Activated naive CD4-positive, alpha-beta T cell treated with anti-CD3 and anti-CD28 coated beads for 36 hours (primary cell): ENCODE measurements at regions of chr13 and their contacts with region 1.

Region 1: GRCh38 chr13:114128624-114129522 is 3.5 kb downstream of the RASA3 start:
- DNase-seq: peak; percentile 96
- H3K4me3 Mint-ChIP-seq: peak overlapping the region; percentile 97
- H3K27ac Mint-ChIP-seq: peak overlapping the region; percentile 93
- H3K4me1 Mint-ChIP-seq: peaks cover 57% of the 10 kb centered on the region
- H3K27me3 Mint-ChIP-seq: no peaks in the 10 kb centered on the region

Region 2: DNA sequence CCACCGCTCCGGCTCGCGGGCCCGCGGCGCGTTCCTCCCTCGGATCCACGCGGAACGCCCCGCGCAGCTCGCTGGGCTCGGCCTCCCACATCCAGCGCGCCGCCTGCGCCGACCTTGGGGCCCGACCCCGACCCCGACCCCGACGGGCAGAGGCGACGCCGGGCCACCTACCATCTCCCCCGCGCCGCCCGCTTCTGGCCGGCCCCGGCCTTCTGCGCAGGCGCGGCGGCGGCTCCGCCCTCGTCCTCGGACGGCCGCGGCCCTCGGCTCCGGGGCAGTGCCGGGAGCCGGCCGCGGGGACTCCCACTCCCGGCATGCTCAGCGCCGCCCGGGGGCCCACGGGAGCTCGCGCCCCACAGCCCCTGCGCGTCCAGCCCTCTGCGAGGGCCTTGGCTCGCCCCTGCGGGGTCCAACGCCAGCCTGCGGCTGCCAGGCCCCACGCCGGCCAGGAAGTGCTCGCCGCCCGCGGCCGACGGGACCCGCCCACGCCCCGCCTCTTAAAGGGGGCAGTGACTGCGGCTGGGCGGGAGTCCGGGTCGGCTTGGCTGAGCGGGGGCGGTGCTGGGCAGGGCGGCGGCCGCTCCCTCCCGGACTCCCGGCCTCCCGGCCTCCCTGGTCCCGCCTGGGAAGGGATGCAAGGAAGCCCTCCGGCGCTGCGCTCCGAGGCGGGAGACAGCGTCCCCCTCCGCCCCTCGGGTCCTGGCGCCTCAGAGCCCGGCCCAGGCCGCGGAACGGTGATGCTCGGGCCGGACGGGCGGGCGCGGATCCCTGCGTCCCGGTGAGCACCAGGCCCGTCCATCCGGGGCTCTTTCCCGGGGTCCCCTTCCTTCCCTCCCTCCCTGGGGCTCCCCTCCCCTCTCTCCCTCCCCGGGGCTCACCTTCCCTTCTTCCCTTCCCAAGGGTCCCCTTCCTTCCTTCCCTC is 638.1 kb before region 1 on chr13 and contains the start of gene DCUN1D2:
- CTCF ChIA-PET with region 1: no interaction called
- intact Hi-C with region 1: loop called (anchors 10 kb)
- DNase-seq: peak; percentile 70
- H3K4me3 Mint-ChIP-seq: peak within 1 kb of the TSS; percentile 96
- H3K27ac Mint-ChIP-seq: peak within 1 kb of the TSS; percentile 85
- H3K4me1 Mint-ChIP-seq: peaks cover 64% of the 10 kb centered on the region
- H3K27me3 Mint-ChIP-seq: no peaks in the 10 kb centered on the region
- total RNA-seq, gene DCUN1D2: 14.3 to 14.7 TPM

Region 3: GRCh38 chr13:114110091-114110829 is 18.6 kb before region 1 on chr13:
- CTCF ChIA-PET with region 1: interaction called, 10 read pairs
- intact Hi-C with region 1: no loop called
- DNase-seq: peak; percentile 88
- H3K4me3 Mint-ChIP-seq: peak overlapping the region; percentile 82
- H3K27ac Mint-ChIP-seq: peak overlapping the region; percentile 90
- H3K4me1 Mint-ChIP-seq: peaks cover 83% of the 10 kb centered on the region
- H3K27me3 Mint-ChIP-seq: no peaks in the 10 kb centered on the region

Region 4: DNA sequence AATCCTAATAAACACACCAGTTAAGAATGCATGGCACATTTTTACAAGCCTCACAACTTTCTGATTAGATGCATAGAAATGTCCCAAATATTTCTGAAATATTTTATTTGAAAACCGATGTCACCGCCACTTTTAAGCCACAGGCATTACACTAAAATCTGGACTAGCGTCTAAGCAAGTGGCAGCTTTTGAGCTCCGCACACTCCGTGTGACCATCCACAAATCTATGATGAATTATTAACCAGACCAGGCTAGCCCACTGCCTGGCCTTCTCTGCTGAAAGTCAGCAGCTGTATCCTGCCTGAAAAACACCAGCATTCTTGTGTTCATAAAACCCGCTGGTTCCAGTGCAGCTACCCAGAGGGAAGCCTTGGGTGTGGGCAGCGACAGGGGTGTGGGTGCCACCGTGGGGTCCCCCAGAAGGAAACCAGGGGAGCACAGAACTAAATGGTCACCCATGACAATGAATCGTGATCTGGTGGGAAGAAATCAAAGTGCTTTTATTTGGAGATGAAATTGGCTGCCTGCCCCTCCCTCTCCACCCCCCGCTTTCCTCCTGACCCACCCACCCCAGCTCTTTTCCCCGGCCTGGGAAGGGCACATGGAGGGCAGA is 10.3 kb before region 1 on chr13:
- CTCF ChIA-PET with region 1: interaction called, 10 read pairs
- intact Hi-C with region 1: loop called (anchors 1 kb)
- DNase-seq: no peak
- H3K4me3 Mint-ChIP-seq: no peak overlapping the region
- H3K27ac Mint-ChIP-seq: peak overlapping the region; percentile 82
- H3K4me1 Mint-ChIP-seq: peaks cover 77% of the 10 kb centered on the region
- H3K27me3 Mint-ChIP-seq: no peaks in the 10 kb centered on the region

Region 5: GRCh38 chr13:114143806-114144605 is 15.1 kb after region 1 on chr13:
- CTCF ChIA-PET with region 1: interaction called, 4 read pairs
- intact Hi-C with region 1: loop called (anchors 1 kb)
- DNase-seq: peak; percentile 70
- H3K4me3 Mint-ChIP-seq: no peak overlapping the region
- H3K27ac Mint-ChIP-seq: peak overlapping the region; percentile 54
- H3K4me1 Mint-ChIP-seq: peaks cover 40% of the 10 kb centered on the region
- H3K27me3 Mint-ChIP-seq: no peaks in the 10 kb centered on the region

Region 6: GRCh38 chr13:114314074-114314912 is 185.4 kb after region 1 on chr13 and contains the start of gene CHAMP1:
- CTCF ChIA-PET with region 1: no interaction called
- intact Hi-C with region 1: loop called (anchors 1 kb)
- DNase-seq: peak; percentile 95
- H3K4me3 Mint-ChIP-seq: peak within 1 kb of the TSS; percentile 84
- H3K27ac Mint-ChIP-seq: peak within 1 kb of the TSS; percentile 100
- H3K4me1 Mint-ChIP-seq: peaks cover 49% of the 10 kb centered on the region
- H3K27me3 Mint-ChIP-seq: no peaks in the 10 kb centered on the region
- total RNA-seq, gene CHAMP1: 50.6 to 52.6 TPM